A549 (cell line): ENCODE measurements at regions of chr11 and their contacts with region 1.

Region 1: GRCh38 chr11:134050541-134051383 is 18.1 kb upstream of the JAM3 start:
- DNase-seq: peak; percentile 33 to 55
- ATAC-seq: peak; percentile 70 to 92
- H3K4me3 ChIP-seq: peak overlapping the region; percentile 18; the same call in 1 of the 3 replicates
- H3K27ac ChIP-seq: no peak overlapping the region
- H3K4me1 ChIP-seq: peaks cover 3% of the 10 kb centered on the region; the same call in 1 of the 3 replicates
- CTCF ChIP-seq: peak; percentile 68
- EP300 ChIP-seq: no peak
- POLR2A ChIP-seq: no peak
- RAD21 ChIP-seq: peak; percentile 66 to 69

Region 2: GRCh38 chr11:134040386-134041302 is 10.1 kb before region 1 on chr11:
- CTCF ChIA-PET with region 1: interaction called, 24 read pairs
- POLR2A ChIA-PET with region 1: no interaction called
- DNase-seq: no peak
- ATAC-seq: no peak
- H3K4me3 ChIP-seq: no peak overlapping the region
- H3K27ac ChIP-seq: no peak overlapping the region
- H3K4me1 ChIP-seq: no peaks in the 10 kb centered on the region
- CTCF ChIP-seq: no peak
- EP300 ChIP-seq: no peak
- POLR2A ChIP-seq: no peak
- RAD21 ChIP-seq: no peak

Region 3: GRCh38 chr11:134062265-134063123 is 11.7 kb after region 1 on chr11:
- CTCF ChIA-PET with region 1: interaction called, 15 read pairs
- POLR2A ChIA-PET with region 1: no interaction called
- DNase-seq: no peak
- ATAC-seq: no peak
- H3K4me3 ChIP-seq: no peak overlapping the region
- H3K27ac ChIP-seq: no peak overlapping the region
- H3K4me1 ChIP-seq: no peaks in the 10 kb centered on the region
- CTCF ChIP-seq: no peak
- EP300 ChIP-seq: no peak
- POLR2A ChIP-seq: no peak
- RAD21 ChIP-seq: no peak

Region 4: DNA sequence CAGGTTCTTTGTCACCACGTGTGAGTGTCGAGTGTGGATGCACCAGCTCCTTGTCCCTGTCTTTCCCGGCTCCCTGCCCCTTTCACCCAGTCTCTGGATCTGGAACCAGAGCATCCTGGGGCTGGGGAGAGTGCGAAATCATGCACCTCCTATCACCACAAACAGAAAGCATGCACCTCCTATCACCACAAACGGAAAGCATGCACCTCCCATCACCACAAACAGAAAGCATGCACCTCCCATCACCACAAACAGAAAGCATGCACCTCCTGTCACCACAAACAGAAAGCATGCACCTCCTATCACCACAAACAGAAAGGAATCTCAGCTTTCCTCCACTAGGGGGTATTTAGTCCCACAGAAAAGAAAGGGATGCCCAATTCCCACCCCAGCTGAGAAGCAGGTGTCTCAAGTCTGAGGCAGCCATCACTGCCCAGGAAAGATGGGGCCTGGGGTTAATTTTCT is 219.5 kb after region 1 on chr11:
- CTCF ChIA-PET with region 1: no interaction called
- POLR2A ChIA-PET with region 1: no interaction called
- DNase-seq: peak in 1 of 2 experiments; percentile 31
- ATAC-seq: peak; percentile 54 to 79; a peak in 3 of 6 replicates
- H3K4me3 ChIP-seq: no peak overlapping the region
- H3K27ac ChIP-seq: no peak overlapping the region
- H3K4me1 ChIP-seq: 0 out of 3 replicates have a peak, but pooled peaks cover under 1% of the 10 kb centered on the region
- CTCF ChIP-seq: no peak
- EP300 ChIP-seq: no peak
- POLR2A ChIP-seq: no peak
- RAD21 ChIP-seq: no peak